Left cardiac atrium (tissue), 4 donors: ENCODE measurements at regions of chr21 and their contacts with region 1.

Region 1: DNA sequence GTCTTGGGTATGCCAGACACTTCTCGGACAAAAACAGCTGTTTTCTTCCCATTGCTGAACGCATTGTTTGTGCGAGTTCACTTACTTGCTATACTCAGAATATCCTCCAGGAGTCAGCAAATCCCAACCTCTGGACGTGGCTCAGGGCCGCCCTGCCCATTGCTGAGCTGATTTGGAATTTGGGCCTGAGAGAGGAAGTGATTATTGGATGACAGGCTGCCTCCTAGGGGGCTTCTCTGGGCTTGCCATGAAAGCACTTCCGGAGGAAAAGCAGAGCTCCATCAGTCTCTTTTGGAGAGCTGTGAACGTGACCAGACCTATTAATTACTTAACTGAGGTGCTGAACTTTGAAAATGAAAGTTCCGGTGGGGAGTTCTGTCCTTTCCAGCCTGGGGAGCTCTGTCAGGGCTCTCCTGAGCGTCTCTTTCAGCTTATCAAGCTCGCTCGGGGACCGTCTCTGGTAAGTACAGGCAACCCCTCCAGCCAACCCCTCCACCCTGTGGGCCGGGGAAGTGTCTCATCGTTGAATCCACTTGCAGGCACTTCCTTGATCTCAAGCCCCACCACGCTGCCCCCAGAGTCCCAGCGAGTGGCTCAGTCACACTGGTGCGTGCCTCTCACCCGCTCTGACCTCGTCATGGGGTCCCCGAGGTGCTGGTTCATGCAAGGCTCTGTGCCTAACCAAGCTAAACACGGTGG is 76.9 kb downstream of the CLIC6 start:
- DNase-seq: peak; percentile 70
- ATAC-seq: peak; percentile 86 to 95

Region 2: GRCh38 chr21:34100790-34101189 is 644.9 kb before region 1 on chr21:
- intact Hi-C with region 1: no loop called
- DNase-seq: no peak
- ATAC-seq: no peak

Region 3: DNA sequence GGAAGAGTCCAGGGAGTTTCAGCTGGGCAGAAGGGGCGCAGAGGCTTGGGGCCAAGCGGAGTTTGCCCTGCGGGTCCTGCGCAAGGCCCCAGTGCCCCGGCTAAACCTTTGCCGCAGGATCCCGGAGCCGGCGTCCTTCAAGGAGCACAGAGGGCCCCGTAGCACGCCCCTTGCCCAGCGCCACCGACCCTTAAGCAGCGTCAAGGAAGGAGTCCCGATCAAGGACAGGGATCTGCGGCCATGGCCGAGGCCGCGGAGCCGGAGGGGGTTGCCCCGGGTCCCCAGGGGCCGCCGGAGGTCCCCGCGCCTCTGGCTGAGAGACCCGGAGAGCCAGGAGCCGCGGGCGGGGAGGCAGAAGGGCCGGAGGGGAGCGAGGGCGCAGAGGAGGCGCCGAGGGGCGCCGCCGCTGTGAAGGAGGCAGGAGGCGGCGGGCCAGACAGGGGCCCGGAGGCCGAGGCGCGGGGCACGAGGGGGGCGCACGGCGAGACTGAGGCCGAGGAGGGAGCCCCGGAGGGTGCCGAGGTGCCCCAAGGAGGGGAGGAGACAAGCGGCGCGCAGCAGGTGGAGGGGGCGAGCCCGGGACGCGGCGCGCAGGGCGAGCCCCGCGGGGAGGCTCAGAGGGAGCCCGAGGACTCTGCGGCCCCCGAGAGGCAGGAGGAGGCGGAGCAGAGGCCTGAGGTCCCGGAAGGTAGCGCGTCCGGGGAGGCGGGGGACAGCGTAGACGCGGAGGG is 76.4 kb before region 1 on chr21:
- intact Hi-C with region 1: no loop called
- DNase-seq: no peak
- ATAC-seq: peak; percentile 62 to 71

Region 4: DNA sequence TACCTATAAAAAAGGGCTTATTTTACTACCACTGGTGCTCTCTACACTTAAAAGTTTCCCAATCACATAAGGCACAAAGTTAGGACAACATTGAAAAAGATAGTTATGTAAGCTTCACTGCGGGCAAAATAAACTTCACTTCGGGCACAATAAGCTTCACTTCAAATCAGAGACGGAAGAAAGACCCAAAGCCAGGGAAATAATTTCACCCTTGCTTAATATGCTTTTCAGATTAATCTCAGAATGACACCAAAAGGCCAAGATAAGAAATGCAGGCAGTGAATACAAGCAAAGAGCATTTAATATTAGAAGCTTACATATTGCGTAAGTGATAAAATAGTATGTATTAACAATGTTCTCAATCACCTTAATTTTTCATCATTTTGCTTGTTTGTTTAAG is 870.4 kb after region 1 on chr21:
- intact Hi-C with region 1: loop called in 1 of 2 experiments (anchors 10 kb)
- DNase-seq: no peak
- ATAC-seq: peak in 1 of 2 donors; percentile 41

Region 5: GRCh38 chr21:35840197-35840799 is 1094.6 kb after region 1 on chr21:
- intact Hi-C with region 1: loop called (anchors 2 to 10 kb)
- DNase-seq: peak; percentile 71
- ATAC-seq: peak; percentile 66 to 75

Region 6: DNA sequence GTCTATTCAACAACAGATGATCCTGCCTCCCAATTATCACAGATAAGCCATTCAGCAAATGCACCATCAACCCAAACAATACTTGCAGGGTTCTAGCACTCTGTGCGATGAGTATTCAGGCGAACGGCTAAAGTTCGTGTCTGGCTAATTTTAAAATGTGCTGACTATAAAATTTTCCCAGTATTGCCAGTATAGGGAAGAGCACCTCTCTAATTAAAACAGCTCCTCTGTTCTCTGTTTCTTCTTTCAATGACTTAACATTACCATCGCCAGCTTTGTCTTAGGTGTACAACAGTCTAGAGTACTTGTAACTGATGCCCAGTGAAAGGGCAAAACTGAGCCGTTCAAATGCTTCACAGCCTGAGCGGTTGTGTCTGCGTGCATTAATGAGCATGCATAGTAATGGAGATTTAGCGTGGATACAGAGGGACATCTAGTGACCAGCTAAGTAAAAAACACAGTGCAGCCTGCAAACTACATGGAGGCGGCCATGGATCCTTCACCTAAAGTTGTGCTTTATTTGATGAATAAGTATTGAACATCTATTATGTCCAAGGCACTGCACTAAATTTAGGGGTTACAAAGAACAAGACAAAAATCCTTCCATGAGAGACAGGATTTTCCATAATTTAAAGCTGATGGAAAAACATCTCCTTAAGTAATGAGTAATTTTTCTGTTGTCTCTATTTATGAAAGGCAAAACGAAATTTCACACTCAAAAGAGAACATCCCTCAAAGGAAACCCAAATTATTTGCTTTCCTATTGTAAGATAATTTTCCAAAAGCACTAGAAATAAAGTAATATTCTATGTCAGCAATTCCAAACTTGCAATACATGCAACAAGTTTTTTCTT is 1194.6 kb after region 1 on chr21:
- intact Hi-C with region 1: loop called in 1 of 2 experiments (anchors 5 kb)
- DNase-seq: peak; percentile 27
- ATAC-seq: peak; percentile 95 to 97

Region 7: GRCh38 chr21:36028127-36029069 is 1282.7 kb after region 1 on chr21:
- intact Hi-C with region 1: loop called in 1 of 2 experiments (anchors 10 kb)
- DNase-seq: peak; percentile 68
- ATAC-seq: peak; percentile 90 to 92